ENCODE measurements at regions of chr4 and their contacts with region 1.

Region 1: GRCh38 chr4:54139332-54139731 is 39.4 kb downstream of the GSX2 start:
- DNase-seq: no peak
- H3K4me3 ChIP-seq: no peak overlapping the region
- H3K27ac ChIP-seq: no peak overlapping the region
- H3K4me1 ChIP-seq: no peaks in the 10 kb centered on the region
- H3K27me3 ChIP-seq: no peaks in the 10 kb centered on the region
- CTCF ChIP-seq: no peak

Region 2: DNA sequence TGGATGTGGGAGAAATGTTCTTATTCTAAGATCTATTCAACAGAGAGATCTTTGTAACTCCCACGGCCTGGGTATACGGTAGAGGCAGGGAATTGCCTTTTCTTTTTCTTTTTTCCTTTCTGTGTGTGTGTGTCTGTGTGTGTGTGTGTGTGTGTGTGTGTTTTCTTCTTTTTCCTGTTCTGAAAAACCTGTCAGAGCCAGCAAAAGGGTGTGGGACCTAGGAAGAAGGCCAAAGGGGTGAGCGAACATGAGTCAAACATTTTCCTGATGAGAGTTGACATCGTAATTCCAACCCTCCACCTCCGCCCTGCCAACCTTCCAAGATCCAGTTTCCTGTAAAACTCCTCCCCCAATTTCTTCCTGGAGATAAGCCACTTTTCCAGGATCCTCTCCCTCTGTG is 72.2 kb before region 1 on chr4:
- CTCF ChIA-PET with region 1: no interaction called
- POLR2A ChIA-PET with region 1: no interaction called
- intact Hi-C with region 1: no loop called
- DNase-seq: peak; percentile 42 to 71
- H3K4me3 ChIP-seq: no peak overlapping the region
- H3K27ac ChIP-seq: peak overlapping the region; percentile 73
- H3K4me1 ChIP-seq: peaks cover 36% of the 10 kb centered on the region
- H3K27me3 ChIP-seq: no peaks in the 10 kb centered on the region
- CTCF ChIP-seq: no peak

Region 3: GRCh38 chr4:54197926-54198325 is 58.6 kb after region 1 on chr4:
- CTCF ChIA-PET with region 1: interaction called, 11 read pairs
- POLR2A ChIA-PET with region 1: no interaction called
- intact Hi-C with region 1: no loop called
- DNase-seq: no peak
- H3K4me3 ChIP-seq: no peak overlapping the region
- H3K27ac ChIP-seq: no peak overlapping the region
- H3K4me1 ChIP-seq: no peaks in the 10 kb centered on the region
- H3K27me3 ChIP-seq: no peaks in the 10 kb centered on the region
- CTCF ChIP-seq: no peak

Region 4: DNA sequence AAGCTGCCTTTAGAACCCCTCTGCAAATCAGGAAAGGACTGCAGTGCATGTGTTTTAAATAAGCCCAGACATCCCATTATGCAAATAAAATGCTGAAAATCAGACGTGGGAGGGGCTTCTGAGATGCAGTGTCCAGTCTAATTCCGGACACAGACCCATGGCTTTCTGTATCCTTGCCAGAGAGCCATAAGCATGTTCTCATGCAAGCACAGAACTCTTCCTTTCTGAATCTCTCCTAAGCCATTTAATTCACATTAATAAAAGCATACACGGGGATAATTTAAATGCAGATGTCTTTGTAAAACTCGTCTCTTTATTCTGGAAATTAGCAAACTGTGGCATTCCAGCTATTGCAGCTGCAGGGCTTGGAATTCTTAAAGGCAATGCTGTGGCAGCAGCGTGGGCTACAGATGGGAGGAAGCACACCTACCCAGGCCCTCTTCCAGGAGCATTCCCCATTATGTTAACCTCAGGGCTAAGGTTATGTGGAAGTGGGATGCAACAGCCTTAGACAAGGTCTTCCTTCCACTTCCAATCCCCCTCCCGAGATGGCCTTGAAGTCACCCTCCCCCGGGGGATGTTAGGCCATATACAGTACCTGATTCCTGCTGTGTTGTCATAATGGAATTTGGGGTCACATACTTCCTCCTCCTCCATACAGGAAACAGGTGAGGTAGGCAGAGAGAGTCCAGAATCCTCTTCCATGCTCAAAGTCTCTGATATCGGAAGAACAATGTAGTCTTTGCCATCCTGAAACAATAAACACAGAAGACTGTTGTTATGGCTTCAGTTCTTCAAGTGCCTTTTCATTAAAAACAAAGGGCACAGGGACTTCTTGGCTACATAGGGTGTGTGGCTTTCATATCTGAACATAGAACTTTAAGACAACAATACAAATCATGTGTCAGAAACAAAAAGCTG is 947.9 kb after region 1 on chr4:
- CTCF ChIA-PET with region 1: no interaction called
- POLR2A ChIA-PET with region 1: no interaction called
- intact Hi-C with region 1: no loop called
- DNase-seq: no peak
- H3K4me3 ChIP-seq: no peak overlapping the region
- H3K27ac ChIP-seq: no peak overlapping the region
- H3K4me1 ChIP-seq: no peaks in the 10 kb centered on the region
- H3K27me3 ChIP-seq: no peaks in the 10 kb centered on the region
- CTCF ChIP-seq: no peak

Measured in PC-9 (cell line).